ENCODE measurements at regions of chr19 and their contacts with region 1.

Region 1: GRCh38 chr19:12825254-12826131 is 8.9 kb downstream of the RTBDN start:
- DNase-seq: no peak
- H3K4me3 ChIP-seq: peak overlapping the region; percentile 12; the same call in 1 of the 2 replicates
- CTCF ChIP-seq: peak; percentile 46

Region 2: GRCh38 chr19:12815088-12815487 is 10.4 kb before region 1 on chr19:
- CTCF ChIA-PET with region 1: interaction called, 15 read pairs
- POLR2A ChIA-PET with region 1: no interaction called
- DNase-seq: no peak
- H3K4me3 ChIP-seq: no peak overlapping the region
- CTCF ChIP-seq: no peak

Region 3: DNA sequence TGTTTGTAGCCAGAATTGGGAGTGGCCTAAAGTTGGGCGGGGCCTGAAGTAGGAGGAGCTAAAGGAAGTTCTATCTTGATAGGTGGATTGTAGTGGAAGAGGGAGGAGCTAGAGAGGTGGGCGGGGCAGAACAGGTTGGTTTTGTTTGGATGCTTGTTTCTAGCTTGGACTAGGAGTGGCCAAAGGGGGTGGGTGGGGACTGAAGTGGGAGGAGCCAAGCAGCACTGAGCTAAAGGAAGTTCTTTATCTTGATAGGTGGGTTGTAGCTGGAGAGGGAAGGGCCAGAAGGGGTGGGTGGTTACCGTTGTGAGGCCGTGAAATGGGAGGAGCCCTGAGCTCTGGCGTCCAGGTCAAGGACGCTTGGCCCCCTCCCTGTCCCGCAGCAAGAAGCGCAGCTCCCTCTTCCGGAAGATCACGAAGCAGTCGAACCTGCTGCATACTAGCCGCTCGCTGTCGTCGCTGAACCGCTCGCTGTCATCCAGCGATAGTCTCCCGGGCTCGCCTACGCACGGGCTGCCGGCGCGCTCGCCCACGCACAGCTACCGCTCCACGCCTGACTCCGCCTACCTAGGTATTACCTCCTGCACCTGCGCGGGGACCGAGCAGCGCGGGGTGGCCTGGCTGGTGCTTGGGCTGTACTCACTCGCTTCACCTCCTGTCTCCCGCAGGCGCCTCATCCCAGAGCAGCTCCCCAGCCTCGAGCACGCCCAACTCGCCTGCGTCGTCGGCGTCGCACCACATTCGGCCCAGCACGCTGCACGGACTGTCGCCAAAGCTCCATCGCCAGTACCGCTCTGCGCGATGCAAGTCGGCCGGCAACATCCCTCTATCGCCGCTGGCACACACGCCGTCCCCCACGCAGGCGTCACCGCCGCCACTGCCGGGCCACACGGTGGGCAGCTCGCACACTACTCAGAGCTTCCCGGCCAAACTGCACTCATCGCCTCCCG is 47.7 kb after region 1 on chr19:
- CTCF ChIA-PET with region 1: no interaction called
- POLR2A ChIA-PET with region 1: no interaction called
- DNase-seq: no peak
- H3K4me3 ChIP-seq: peak overlapping the region; percentile 23
- CTCF ChIP-seq: no peak

Measured in AG04449 (cell line).